ENCODE measurements at regions of chr7 and their contacts with region 1.

Region 1: GRCh38 chr7:37440738-37441385 is 7.8 kb downstream of the ELMO1 start:
- DNase-seq: no peak
- ATAC-seq: peak; percentile 53

Region 2: DNA sequence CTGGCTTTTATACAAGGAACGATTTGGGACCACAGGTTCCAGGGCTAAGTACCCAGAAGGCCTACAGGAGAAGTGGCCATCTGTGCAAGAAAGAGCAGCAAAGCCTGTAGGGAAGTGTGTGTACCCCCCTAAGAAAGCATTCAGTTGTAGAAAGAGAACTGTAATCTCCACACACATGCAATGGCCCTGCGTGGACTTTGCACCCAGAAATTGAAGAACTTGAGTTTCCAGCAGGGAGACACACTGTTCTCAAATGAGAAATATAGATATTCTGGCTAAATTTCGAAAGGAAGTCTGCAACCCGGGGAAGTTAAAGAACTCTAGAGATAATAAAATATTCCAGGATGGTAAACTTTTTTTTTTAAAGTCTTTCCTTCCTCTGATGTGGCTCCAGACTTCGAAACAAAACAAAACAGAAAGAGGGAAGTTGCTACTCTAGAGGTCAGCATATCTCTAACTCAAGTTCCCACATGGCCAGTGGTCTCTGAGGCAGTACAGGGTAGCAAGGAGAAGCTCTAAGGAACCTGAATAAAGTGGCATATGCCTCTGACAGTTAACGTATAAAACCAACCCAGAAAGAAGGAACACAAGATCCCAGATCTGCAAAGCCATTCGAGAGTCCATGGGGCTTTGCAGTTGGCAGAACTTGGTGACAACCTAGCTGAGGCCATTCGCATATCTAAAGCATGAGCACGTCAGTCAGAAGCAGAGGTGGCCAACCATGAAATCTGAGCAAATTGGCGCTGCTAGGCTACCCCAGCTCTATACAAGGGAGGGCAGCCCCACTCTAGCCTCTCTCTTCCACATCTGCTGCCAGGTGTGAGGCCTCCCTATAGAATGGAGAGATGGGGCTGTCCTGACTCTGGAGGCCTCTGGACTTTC is 48.8 kb before region 1 on chr7:
- intact Hi-C with region 1: loop called (anchors 5 kb)
- DNase-seq: no peak
- ATAC-seq: peak; percentile 59

Region 3: DNA sequence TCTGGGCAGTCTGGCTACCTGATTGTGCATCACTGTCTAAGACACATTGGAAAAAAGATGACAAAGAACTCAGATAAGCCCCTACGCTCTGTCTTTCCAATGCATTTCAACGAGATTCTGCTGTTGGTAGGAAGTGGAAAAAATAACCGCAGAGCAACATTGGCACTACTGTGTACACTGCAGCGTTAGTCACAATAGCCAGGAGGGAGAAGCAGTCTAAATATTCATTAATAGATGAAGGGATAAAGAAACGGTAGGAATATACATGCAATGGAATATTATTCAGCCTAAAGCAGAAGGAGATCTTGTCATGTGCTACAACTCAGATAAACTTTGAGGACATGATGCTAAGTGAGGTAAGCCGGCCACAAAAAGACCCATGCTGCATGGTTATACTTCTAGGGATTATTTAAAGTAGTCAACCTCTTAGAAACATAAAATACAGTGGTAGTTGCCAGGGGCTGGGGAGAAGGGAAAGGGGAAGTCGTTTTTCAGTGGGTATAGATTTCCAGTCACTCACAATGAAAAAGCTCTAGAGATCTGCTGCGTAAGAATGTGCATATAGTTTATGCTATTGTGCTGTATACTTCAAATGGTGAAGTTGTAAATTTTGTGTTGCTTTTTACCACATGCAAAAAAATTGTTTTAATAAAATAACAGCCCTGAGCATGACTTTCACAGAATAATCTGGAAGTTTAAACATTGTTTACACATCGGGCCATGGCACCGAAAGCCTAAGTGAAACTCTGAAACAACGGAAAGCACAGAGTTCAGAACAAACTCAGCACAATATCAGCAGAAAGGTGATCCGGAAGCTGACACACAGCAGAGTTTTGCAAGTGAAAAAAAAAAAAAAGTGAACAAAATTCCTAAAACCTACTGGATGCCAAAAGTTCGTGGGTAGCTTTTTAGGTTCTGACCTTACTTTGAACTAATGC is 32.3 kb before region 1 on chr7:
- intact Hi-C with region 1: loop called (anchors 5 kb)
- DNase-seq: no peak
- ATAC-seq: no peak

Region 4: DNA sequence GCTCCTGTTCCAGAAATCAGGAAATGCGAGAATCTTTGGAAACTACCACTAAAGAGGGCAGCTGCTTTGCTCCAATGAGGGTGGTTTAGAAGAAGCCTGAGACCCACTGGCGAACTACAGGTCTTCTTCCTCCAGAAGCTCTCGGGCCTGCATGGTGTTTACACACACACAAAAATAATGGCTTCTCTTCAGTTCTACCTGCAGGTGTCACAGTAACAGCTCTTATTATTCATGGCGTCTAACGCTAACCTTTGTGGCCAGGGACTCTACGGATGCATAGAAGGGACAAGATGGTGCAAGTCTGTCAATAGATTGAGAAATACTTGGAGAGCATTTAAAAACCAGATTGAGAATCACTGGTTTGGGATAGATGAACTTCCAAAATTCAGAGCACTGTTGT is 265.1 kb after region 1 on chr7:
- intact Hi-C with region 1: no loop called
- DNase-seq: no peak
- ATAC-seq: no peak

Measured in Right ventricle myocardium inferior (tissue), 1 donor.